H1 (cell line): ENCODE measurements at regions of chr3 and their contacts with region 1.

Region 1: GRCh38 chr3:147391781-147392624 is 14.3 kb downstream of the ZIC4 start:
- DNase-seq: peak in 1 of 2 experiments; percentile 90
- H3K4me3 ChIP-seq: peak overlapping the region; percentile 30 to 68 (median 50); a peak in 7 of 8 replicates
- H3K27ac ChIP-seq: no peak overlapping the region
- H3K4me1 ChIP-seq: peaks cover 20 to 47% (median 21%) of the 10 kb centered on the region in 4 experiments
- H3K27me3 ChIP-seq: peaks cover 76 to 97% (median 92%) of the 10 kb centered on the region in 4 experiments
- CTCF ChIP-seq: peak in 2 of 3 experiments; percentile 53 to 61; a peak in 3 of 4 replicates
- EP300 ChIP-seq: no peak
- POLR2A ChIP-seq: no peak
- RAD21 ChIP-seq: peak; percentile 44 to 53

Region 2: GRCh38 chr3:147002721-147003120 is 389.3 kb before region 1 on chr3:
- CTCF ChIA-PET with region 1: no interaction called
- POLR2A ChIA-PET with region 1: no interaction called
- DNase-seq: no peak
- H3K4me3 ChIP-seq: no peak overlapping the region
- H3K27ac ChIP-seq: no peak overlapping the region
- H3K4me1 ChIP-seq: no peaks in the 10 kb centered on the region
- H3K27me3 ChIP-seq: no peaks in the 10 kb centered on the region
- CTCF ChIP-seq: no peak
- EP300 ChIP-seq: no peak
- POLR2A ChIP-seq: no peak
- RAD21 ChIP-seq: no peak

Region 3: GRCh38 chr3:147369661-147370123 is 22.3 kb before region 1 on chr3:
- CTCF ChIA-PET with region 1: interaction called, 10 read pairs
- POLR2A ChIA-PET with region 1: interaction called, 8 read pairs
- DNase-seq: peak in 1 of 2 experiments; percentile 60
- H3K4me3 ChIP-seq: peak overlapping the region in 2 of 4 experiments; percentile 3 to 22; a peak in 5 of 8 replicates
- H3K27ac ChIP-seq: no peak overlapping the region
- H3K4me1 ChIP-seq: peaks cover 4 to 17% (median 16%) of the 10 kb centered on the region in 4 experiments
- H3K27me3 ChIP-seq: peaks cover 72 to 93% (median 86%) of the 10 kb centered on the region in 4 experiments
- CTCF ChIP-seq: no peak
- EP300 ChIP-seq: no peak
- POLR2A ChIP-seq: no peak
- RAD21 ChIP-seq: no peak

Region 4: DNA sequence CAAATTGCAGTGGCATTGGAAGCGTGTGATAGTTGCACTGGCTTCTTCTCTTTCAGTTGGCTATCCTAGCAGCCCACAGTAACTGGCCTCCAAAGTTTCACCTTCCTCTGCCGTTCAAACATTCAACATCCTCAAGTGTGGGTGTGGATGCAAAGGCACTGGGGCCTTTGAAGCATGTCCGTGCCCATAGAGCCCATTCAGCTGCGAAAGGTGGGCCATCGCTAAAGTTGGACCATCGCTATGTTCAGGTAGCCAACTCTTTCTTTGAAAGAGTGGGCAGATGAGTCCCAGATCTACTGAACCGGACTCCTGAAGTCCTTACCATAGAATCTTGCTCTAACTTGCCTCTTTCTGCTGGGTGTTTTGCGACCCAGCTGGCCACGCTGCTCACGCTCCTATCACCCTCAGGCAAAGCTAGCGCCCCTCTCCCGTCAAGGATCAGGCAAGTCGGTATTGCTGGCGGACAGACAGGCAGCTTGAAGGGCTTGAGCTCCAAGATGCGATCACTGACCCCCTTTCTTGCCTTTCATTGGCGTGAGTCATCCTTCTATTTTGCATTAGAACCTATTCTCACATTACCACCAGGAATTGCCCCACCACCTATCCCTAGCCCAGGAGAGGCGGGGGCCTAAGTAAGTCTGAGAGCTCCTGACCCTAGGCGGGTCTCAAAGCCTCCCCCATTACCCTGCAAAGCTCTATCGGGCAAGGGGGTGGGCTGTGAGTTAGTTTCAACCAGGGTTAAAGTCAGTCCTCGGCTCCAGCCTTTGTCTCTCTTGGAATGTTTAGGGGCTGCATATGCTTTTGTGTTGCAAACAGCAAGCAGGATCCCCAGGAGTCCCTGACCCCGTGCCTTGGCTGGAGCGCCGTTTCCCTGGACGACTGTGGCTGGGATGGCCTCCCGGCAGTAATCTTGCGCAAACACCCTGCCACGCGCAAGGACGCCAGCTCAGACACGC is 14.3 kb before region 1 on chr3:
- CTCF ChIA-PET with region 1: interaction called, 197 read pairs
- POLR2A ChIA-PET with region 1: interaction called, 8 read pairs
- DNase-seq: peak; percentile 76 to 82
- H3K4me3 ChIP-seq: peak overlapping the region; percentile 27 to 62 (median 36); a peak in 7 of 8 replicates
- H3K27ac ChIP-seq: peak overlapping the region; percentile 3; the same call in 1 of the 2 replicates
- H3K4me1 ChIP-seq: peaks cover 10 to 35% (median 24%) of the 10 kb centered on the region in 4 experiments
- H3K27me3 ChIP-seq: peaks cover 50 to 78% (median 65%) of the 10 kb centered on the region in 4 experiments
- CTCF ChIP-seq: no peak
- EP300 ChIP-seq: no peak
- POLR2A ChIP-seq: no peak
- RAD21 ChIP-seq: no peak; a peak in 1 of 4 replicates

Region 5: DNA sequence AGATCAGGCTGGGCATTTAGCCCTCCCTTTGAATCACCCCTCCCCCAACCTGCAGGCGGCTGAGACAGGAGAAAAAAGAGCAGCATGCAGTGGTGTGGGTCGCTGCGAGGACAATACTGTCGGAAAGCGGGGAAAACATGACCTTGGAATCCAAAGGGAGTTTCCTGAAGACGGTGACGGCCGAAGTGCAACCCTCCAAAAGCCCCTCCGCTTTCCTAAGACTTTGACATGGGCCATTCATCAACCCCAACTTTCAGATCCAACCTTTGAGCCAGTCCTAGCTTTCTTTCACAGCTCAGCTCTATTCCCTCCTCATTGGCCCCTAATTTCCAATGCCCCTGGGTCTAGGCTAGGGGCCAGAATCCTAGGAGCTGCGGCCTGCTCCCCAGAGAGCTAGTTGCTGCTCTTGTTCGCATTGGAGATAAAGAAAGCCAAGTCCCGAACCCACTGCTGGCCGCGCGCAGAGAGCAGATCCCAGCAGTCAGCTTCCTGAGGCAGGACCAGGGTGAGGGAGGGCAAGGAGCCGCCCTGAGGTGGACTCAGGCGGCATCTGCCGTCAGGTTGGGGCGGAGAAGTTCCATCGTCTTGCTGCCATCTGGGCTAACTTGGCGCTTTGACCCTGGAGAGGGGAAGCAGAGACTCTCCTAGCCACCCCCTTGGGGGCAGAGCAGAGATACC is 13.4 kb after region 1 on chr3:
- CTCF ChIA-PET with region 1: interaction called, 485 read pairs
- POLR2A ChIA-PET with region 1: interaction called, 26 read pairs
- DNase-seq: peak in 1 of 2 experiments; percentile 70
- H3K4me3 ChIP-seq: peak overlapping the region in 3 of 4 experiments; percentile 10 to 40 (median 14); a peak in 4 of 8 replicates
- H3K27ac ChIP-seq: no peak overlapping the region
- H3K4me1 ChIP-seq: peaks cover 19 to 42% (median 30%) of the 10 kb centered on the region in 4 experiments
- H3K27me3 ChIP-seq: peaks cover 53 to 87% (median 79%) of the 10 kb centered on the region in 4 experiments
- CTCF ChIP-seq: peak in 1 of 3 experiments; percentile 4; a peak in 1 of 4 replicates
- EP300 ChIP-seq: no peak
- POLR2A ChIP-seq: no peak
- RAD21 ChIP-seq: peak; percentile 24 to 38; a peak in 3 of 4 replicates

Region 6: GRCh38 chr3:147410526-147411237 is 18.7 kb after region 1 on chr3:
- CTCF ChIA-PET with region 1: interaction called, 485 read pairs
- POLR2A ChIA-PET with region 1: interaction called, 26 read pairs
- DNase-seq: peak in 1 of 2 experiments; percentile 71
- H3K4me3 ChIP-seq: peak overlapping the region; percentile 20 to 62 (median 38); a peak in 6 of 8 replicates
- H3K27ac ChIP-seq: no peak overlapping the region
- H3K4me1 ChIP-seq: peaks cover 0 to 41% (median 25%) of the 10 kb centered on the region in 4 experiments; a peak in 6 of 7 replicates
- H3K27me3 ChIP-seq: peaks cover 64 to 98% (median 90%) of the 10 kb centered on the region in 4 experiments
- CTCF ChIP-seq: no peak
- EP300 ChIP-seq: no peak
- POLR2A ChIP-seq: no peak
- RAD21 ChIP-seq: no peak

Region 7: GRCh38 chr3:147418808-147419701 is 27.1 kb after region 1 on chr3:
- CTCF ChIA-PET with region 1: interaction called, 485 read pairs
- POLR2A ChIA-PET with region 1: interaction called, 26 read pairs
- DNase-seq: peak; percentile 92 to 94
- H3K4me3 ChIP-seq: peak overlapping the region; percentile 38 to 58 (median 44)
- H3K27ac ChIP-seq: no peak overlapping the region
- H3K4me1 ChIP-seq: peaks cover 13 to 33% (median 16%) of the 10 kb centered on the region in 4 experiments
- H3K27me3 ChIP-seq: peaks cover 80 to 99% (median 90%) of the 10 kb centered on the region in 4 experiments
- CTCF ChIP-seq: no peak
- EP300 ChIP-seq: no peak
- POLR2A ChIP-seq: no peak
- RAD21 ChIP-seq: no peak